ENCODE measurements at regions of chr18 and their contacts with region 1.

Region 1: GRCh38 chr18:23619388-23619881 is 33.1 kb upstream of the NPC1 start:
- DNase-seq: no peak

Region 2: DNA sequence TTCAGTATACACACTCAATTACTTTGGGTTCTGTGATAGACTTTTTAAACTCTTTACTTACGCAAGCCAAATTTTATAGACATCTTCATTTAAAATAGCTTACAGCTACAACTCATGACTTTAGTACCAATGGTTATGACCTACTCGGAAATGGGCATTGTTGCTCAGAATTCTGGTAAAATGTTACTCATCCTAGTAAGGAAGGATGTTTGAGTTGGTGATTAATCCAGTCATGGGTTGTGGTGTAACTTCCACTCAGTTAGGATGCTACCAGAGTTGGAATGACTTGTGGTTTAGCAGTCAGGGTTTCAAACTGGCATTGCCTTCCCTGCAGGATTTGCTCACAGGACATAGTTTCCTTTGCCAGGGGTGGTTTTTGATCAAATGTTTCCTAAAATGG is 25.7 kb before region 1 on chr18:
- intact Hi-C with region 1: no loop called
- DNase-seq: no peak

Region 3: DNA sequence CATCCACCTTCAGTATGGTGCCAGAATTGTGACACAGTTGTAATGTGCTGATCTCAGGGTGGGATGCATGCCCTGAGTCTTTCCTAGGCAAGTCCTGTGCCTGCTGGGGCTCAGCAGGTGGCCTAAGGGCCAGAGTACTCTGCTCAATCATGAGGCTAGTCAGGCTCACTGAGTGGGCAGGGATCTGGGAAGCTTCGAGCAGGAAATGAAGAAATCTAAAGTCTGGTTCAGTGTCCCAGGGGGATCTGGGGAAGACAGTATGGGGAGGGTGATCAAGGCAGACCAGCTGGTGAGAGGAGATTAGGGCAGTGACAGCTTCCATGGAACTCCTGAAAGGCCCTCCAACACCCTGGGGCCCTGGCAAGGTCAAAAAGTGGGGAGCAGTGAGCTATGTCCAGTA is 52.1 kb after region 1 on chr18:
- intact Hi-C with region 1: no loop called
- DNase-seq: no peak

Region 4: GRCh38 chr18:23701017-23701416 is 81.6 kb after region 1 on chr18:
- intact Hi-C with region 1: loop called (anchors 1 kb)
- DNase-seq: no peak

Region 5: DNA sequence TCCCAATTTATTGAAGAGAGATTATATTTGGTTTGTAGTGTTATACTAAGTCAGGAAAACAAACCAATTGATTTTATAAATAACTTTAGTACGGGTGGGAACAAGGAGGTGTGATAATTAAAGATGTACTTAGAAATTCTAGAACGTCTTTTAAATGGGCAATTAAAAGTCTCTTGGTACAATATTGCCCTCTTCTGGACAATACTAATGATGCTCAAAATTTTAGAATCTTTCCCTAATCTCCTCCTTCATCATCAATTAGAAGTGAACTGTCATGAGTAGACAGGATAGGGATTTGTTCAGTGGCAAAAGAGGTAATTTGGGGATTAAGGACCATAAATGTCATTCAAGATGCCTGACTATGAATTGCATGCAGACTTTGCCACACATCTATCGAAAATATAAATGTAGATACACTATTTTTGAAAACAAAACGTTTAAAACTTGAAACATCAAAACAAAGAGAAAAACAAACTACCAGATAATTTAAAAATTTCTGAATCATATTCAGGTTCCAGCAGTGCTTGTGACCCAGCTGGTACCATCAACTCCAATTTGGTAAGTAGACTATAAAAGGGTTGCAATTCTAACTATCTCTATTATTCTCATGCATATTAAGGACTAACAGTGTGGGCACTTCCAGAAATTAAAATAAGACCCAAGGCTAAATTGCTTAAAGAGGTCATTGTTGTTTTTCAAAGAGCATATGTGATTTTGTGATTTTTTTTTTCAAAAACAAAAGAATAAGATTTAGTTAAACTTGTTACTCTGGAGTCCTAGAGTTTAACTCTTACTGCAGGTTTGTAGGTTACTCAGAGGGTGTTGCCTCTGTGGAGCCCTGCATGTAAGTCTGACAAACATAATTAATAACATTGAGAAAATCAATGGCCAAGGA is 193.4 kb after region 1 on chr18:
- intact Hi-C with region 1: loop called (anchors 5 kb)
- DNase-seq: no peak